ENCODE measurements at regions of chr3 and their contacts with region 1.

Region 1: DNA sequence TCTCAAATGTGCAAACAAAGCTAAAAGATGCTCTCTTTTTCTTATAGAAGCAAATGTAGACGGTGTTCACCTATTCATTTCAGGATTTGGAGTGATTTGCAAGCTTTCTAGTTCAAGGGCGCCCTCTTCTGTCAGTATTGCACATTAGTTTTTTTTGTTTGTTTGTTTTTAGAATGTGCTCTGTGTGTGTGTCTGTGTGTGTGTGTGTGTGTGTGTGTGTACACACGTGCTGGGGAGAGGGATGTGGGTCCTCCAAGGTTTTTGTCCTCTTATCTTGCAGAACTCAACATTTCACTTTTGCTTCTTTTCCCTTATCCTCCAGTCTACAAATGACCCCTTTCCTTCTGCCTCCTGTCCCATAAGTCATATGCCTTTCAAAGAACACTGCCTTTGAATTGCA is 23.5 kb downstream of the DNAH1 start:
- DNase-seq: peak in 1 of 2 donors; percentile 92
- H3K4me3 ChIP-seq: no peak overlapping the region
- H3K27ac ChIP-seq: no peak overlapping the region
- H3K4me1 ChIP-seq: peaks cover 0 to 7% (median 0%) of the 10 kb centered on the region in 4 donors
- H3K27me3 ChIP-seq: no peaks in the 10 kb centered on the region
- CTCF ChIP-seq: peak in 5 of 7 experiments; percentile 54 to 90 (median 63)
- EP300 ChIP-seq: no peak
- POLR2A ChIP-seq: no peak

Region 2: GRCh38 chr3:52220380-52221026 is 119.1 kb before region 1 on chr3:
- intact Hi-C with region 1: loop called (anchors 5 kb)
- DNase-seq: peak; percentile 87 to 93
- H3K4me3 ChIP-seq: no peak overlapping the region
- H3K27ac ChIP-seq: peak overlapping the region in 1 of 5 donors; percentile 85
- H3K4me1 ChIP-seq: peaks cover 45 to 70% (median 56%) of the 10 kb centered on the region in 4 donors
- H3K27me3 ChIP-seq: no peaks in the 10 kb centered on the region
- CTCF ChIP-seq: peak in 5 of 7 experiments; percentile 68 to 93 (median 87)
- EP300 ChIP-seq: no peak
- POLR2A ChIP-seq: no peak

Region 3: DNA sequence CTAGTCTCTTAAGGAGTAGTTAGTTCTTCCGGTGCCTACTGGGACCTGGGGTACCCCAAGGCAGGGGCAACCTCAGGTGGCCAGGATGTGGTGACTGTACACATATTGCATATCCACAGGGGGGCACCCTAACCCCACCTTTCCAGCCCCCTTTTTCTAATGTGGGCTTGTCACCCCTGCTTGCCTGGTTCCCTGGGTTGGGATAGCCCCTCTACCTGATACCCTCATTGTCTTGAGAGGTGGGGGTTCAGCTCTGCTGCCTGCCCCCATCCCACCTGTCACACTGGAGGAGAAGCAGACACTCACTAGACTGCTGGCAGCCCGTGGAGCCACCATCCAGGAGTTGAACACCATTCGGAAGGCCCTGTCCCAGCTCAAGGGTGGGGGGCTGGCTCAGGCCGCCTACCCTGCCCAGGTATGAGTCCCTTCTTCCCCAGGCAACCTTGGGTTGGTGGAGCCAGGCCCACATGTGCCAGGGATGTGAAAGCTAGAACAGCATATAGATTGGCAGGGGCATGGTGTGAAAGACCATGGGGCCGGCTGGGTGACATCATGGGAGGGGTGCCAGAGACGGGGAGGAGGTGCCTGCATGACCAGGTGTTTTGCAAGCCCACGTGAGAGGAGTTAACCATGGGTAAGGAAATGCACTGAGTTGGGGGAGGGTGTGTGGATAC is 48.0 kb before region 1 on chr3:
- intact Hi-C with region 1: loop called (anchors 5 kb)
- DNase-seq: peak in 1 of 2 donors; percentile 69
- H3K4me3 ChIP-seq: no peak overlapping the region
- H3K27ac ChIP-seq: no peak overlapping the region
- H3K4me1 ChIP-seq: peaks cover 25 to 47% (median 42%) of the 10 kb centered on the region in 4 donors
- H3K27me3 ChIP-seq: no peaks in the 10 kb centered on the region
- CTCF ChIP-seq: peak in 2 of 7 experiments; percentile 47 to 49
- EP300 ChIP-seq: no peak
- POLR2A ChIP-seq: no peak

Measured in stomach (tissue), 19 donors.